GM10248 (cell line): ENCODE measurements at regions of chr17 and their contacts with region 1.

Region 1: GRCh38 chr17:69607162-69607834 is 192.8 kb downstream of the MAP2K6 start:
- DNase-seq: peak; percentile 51
- CTCF ChIP-seq: peak; percentile 65

Region 2: DNA sequence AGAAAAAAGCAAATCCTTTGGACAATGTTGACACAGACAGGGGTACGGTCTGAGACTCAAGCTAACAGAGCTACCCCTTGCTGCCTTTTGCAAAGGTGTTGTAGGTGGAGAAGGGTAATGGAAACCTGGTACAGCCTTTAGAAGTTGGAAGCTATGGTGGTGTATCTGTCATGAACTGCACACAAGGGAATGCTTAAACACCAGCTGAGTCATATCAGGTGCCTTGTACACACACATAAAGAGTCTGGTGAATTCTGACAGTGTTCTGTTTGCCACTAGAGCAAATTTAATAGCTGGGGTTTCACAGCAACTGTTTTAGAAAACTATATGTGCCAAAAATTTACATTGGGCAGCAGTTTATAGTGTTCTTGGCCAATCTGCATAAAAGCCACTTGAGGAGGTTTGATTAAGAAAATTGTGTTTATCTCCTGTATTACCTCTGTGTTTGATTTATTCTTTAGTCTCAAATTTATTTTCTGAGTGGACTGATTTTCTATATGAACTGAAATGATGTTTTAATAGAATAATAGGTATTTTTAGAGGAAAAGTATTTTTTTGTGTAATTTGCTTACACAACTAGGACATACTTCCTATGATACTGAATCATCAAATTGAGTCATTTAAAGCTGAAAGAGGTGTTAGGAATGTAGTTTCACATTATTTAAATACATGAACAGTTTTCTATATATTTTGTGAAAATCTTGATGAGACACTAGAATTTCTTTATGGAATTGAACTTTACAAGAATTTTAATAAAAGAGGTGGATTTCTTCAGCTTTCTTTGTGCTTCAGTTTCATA is 55.9 kb before region 1 on chr17:
- CTCF ChIA-PET with region 1: interaction called, 16 read pairs
- POLR2A ChIA-PET with region 1: no interaction called
- DNase-seq: no peak
- CTCF ChIP-seq: no peak

Region 3: DNA sequence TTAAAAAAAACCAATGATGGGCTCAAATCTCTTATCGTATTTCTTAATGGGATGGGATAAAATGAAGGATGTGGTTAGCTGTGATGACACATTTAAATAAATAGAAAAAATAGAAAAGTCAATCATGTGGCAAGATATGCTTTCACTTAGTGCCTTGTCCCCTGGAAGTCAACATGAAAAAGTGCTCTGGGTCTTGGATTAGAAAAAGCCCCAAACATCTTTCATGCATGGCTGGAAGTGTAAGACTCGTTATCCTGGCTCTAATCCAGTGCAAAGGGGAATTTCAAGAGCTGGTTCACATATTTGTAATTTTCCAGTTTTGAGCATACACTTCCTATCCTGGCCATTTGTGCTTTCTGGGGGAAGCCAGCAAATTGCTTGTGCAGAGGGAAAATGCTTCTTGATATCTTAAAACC is 31.9 kb before region 1 on chr17:
- CTCF ChIA-PET with region 1: interaction called, 17 read pairs
- POLR2A ChIA-PET with region 1: interaction called, 3 read pairs
- DNase-seq: no peak
- CTCF ChIP-seq: no peak

Region 4: GRCh38 chr17:69581061-69581961 is 26.0 kb before region 1 on chr17:
- CTCF ChIA-PET with region 1: interaction called, 15 read pairs
- POLR2A ChIA-PET with region 1: interaction called, 3 read pairs
- DNase-seq: peak; percentile 26
- CTCF ChIP-seq: no peak

Region 5: GRCh38 chr17:69620363-69620762 is 13.1 kb after region 1 on chr17:
- CTCF ChIA-PET with region 1: interaction called, 13 read pairs
- POLR2A ChIA-PET with region 1: no interaction called
- DNase-seq: no peak
- CTCF ChIP-seq: no peak

Region 6: GRCh38 chr17:70144260-70144846 is 537.1 kb after region 1 on chr17:
- CTCF ChIA-PET with region 1: interaction called, 13 read pairs
- POLR2A ChIA-PET with region 1: no interaction called
- DNase-seq: no peak
- CTCF ChIP-seq: peak; percentile 51

Region 7: GRCh38 chr17:70552230-70552981 is 945.1 kb after region 1 on chr17:
- CTCF ChIA-PET with region 1: interaction called, 49 read pairs
- POLR2A ChIA-PET with region 1: no interaction called
- DNase-seq: peak; percentile 41
- CTCF ChIP-seq: peak; percentile 44